ENCODE measurements at regions of chr14 and their contacts with region 1.

Region 1: GRCh38 chr14:70907176-70907995 is at the start of gene PCNX1:
- DNase-seq: peak; percentile 64 to 97
- H3K4me3 ChIP-seq: peak within 1 kb of the TSS; percentile 62 to 97 (median 92)
- H3K27ac ChIP-seq: peak within 1 kb of the TSS; percentile 77; the same call in 1 of the 2 replicates
- H3K4me1 ChIP-seq: peaks cover 0 to 9% (median 6%) of the 10 kb centered on the region in 4 experiments; a peak in 5 of 7 replicates
- H3K27me3 ChIP-seq: 0 out of 7 replicates have a peak, but pooled peaks cover 0 to 4% (median 0%) of the 10 kb centered on the region in 4 experiments
- CTCF ChIP-seq: peak; percentile 72 to 90 (median 75)
- EP300 ChIP-seq: no peak
- POLR2A ChIP-seq: peak in 1 of 2 experiments; percentile 57; a peak in 2 of 3 replicates
- RAD21 ChIP-seq: peak; percentile 35 to 72
- total RNA-seq, gene PCNX1: 50.5 and 53.2 TPM in 2 replicates

Region 2: DNA sequence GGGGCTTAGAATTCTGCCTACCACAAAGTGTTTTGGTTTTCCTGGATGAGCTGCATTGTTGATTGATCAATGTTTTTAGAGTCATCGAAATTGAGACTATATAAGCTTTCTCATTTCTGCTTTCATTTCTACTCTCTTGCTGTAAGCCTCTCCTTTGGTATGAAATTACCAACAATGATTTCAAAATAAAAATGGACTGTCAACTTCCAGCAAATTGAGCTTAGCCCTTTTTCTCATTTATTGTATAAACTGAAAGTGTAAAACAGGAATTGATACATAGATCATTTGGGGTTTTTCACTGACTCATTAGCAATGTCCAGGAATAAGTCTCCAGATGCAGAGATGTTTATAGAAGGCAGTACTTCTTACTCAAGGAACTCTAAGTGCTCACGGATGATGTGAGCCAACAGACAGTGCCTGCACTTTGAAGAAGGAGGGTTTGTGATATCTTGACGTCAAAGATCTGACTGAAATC is 20.1 kb before region 1 on chr14:
- CTCF ChIA-PET with region 1: interaction called, 18 read pairs
- POLR2A ChIA-PET with region 1: no interaction called
- DNase-seq: no peak
- H3K4me3 ChIP-seq: no peak overlapping the region
- H3K27ac ChIP-seq: no peak overlapping the region
- H3K4me1 ChIP-seq: peaks cover 0 to 7% (median 3%) of the 10 kb centered on the region in 4 experiments; a peak in 4 of 7 replicates
- H3K27me3 ChIP-seq: no peaks in the 10 kb centered on the region
- CTCF ChIP-seq: no peak
- EP300 ChIP-seq: no peak
- POLR2A ChIP-seq: no peak
- RAD21 ChIP-seq: no peak

Region 3: DNA sequence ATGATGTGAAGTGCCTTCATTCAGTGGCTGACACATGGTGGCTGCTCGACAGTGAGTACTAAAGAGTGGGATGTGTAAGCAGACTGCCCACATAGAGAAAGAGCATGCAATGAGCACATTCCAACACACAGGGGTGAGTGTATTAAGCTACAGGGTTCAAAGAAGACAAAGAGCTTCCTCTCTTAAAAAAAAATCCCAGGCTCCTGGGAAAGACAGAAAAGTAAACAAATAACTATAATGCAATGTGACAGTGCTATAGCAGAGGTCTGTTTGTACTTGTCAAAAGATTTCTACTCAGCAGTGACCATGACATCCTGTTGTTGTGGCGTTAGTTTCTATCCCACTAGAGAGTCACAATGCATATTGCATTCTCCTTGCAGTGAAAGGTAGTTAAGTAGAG is 12.5 kb before region 1 on chr14:
- CTCF ChIA-PET with region 1: interaction called, 11 read pairs
- POLR2A ChIA-PET with region 1: interaction called, 7 read pairs
- DNase-seq: no peak
- H3K4me3 ChIP-seq: no peak overlapping the region
- H3K27ac ChIP-seq: no peak overlapping the region
- H3K4me1 ChIP-seq: no peaks in the 10 kb centered on the region
- H3K27me3 ChIP-seq: no peaks in the 10 kb centered on the region
- CTCF ChIP-seq: no peak
- EP300 ChIP-seq: no peak
- POLR2A ChIP-seq: no peak
- RAD21 ChIP-seq: no peak

Region 4: DNA sequence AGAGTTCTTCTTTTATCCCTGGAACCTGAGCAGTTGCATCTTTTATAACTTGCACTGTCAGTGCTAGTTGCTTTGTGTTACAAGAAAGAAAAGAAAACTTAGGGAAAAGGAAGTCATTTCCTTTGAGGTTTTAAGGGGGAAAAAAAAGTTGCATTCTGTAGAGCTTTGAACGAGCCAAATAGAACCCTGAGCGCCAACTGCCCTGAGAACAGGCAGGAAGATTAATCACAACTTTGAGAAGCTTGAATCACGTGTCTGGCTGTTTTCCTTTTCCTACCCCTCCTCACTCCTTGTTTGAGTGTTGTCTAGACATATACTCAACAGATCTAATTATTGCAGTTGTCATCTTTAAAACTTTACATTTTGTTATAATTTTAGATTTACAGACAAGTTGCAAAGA is 12.4 kb after region 1 on chr14:
- CTCF ChIA-PET with region 1: interaction called, 13 read pairs
- POLR2A ChIA-PET with region 1: interaction called, 5 read pairs
- DNase-seq: no peak
- H3K4me3 ChIP-seq: no peak overlapping the region
- H3K27ac ChIP-seq: no peak overlapping the region
- H3K4me1 ChIP-seq: 0 out of 7 replicates have a peak, but pooled peaks cover 0 to 2% (median 0%) of the 10 kb centered on the region in 4 experiments
- H3K27me3 ChIP-seq: no peaks in the 10 kb centered on the region
- CTCF ChIP-seq: no peak
- EP300 ChIP-seq: no peak
- POLR2A ChIP-seq: no peak
- RAD21 ChIP-seq: no peak

Region 5: GRCh38 chr14:70931008-70931407 is 23.6 kb after region 1 on chr14:
- CTCF ChIA-PET with region 1: interaction called, 11 read pairs
- POLR2A ChIA-PET with region 1: interaction called, 7 read pairs
- DNase-seq: no peak
- H3K4me3 ChIP-seq: no peak overlapping the region
- H3K27ac ChIP-seq: no peak overlapping the region
- H3K4me1 ChIP-seq: peaks cover 0 to 4% (median 2%) of the 10 kb centered on the region in 4 experiments; a peak in 2 of 7 replicates
- H3K27me3 ChIP-seq: no peaks in the 10 kb centered on the region
- CTCF ChIP-seq: no peak
- EP300 ChIP-seq: no peak
- POLR2A ChIP-seq: no peak
- RAD21 ChIP-seq: no peak

Region 6: DNA sequence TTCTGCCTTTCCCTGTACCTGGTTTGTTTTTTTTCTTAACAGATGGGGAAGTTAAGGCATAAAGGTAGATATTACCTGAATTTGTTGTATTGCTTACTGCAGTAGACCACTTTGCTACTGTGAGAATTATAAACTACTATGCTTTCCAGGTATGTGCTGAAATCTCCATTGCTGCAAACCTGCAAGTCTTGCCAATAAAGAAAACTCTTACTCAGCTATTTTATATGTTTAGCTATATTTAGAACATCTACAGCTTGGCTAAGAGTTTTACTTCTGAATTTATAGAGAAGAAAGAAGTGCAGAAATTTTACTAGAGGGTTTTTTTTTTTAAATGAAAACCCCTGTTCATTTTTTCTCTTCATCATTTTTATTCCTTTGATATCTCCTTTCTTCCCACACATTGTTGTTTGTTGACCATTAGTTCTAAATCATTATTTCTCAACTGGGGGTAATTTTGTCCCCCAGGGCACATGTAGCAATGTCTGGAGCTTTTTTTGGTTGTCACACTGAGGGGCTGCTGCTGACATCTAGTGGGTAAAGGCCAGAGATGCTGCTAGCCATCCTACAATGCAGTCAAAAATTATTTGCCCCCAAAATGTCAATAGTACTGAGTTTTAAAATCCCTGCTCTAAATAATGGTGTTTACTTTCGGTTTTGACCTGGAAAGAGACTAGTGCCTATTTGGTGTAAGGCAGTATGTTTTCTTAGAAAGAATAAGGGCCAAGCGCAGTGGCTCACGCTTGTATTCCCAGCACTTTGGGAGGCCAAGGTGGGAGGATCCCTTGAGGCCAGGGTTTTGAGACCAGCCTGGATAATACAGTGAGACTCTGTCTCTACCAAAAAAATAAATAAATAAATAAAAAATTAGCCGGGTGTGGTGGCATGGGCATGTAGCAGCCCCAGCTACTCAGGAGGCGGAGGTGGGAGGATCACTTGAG is 48.4 kb after region 1 on chr14:
- CTCF ChIA-PET with region 1: interaction called, 39 read pairs
- POLR2A ChIA-PET with region 1: no interaction called
- DNase-seq: no peak
- H3K4me3 ChIP-seq: no peak overlapping the region
- H3K27ac ChIP-seq: no peak overlapping the region
- H3K4me1 ChIP-seq: no peaks in the 10 kb centered on the region
- H3K27me3 ChIP-seq: no peaks in the 10 kb centered on the region
- CTCF ChIP-seq: peak; percentile 27 to 63 (median 60)
- EP300 ChIP-seq: no peak
- POLR2A ChIP-seq: no peak
- RAD21 ChIP-seq: peak; percentile 77 to 79

Measured in H1 (cell line).